B cell (primary cell): ENCODE measurements at regions of chr1 and their contacts with region 1.

Region 1: GRCh38 chr1:51491166-51491981 is 27.7 kb downstream of the EPS15 start:
- DNase-seq: peak; percentile 64
- ATAC-seq: peak; percentile 74
- H3K4me3 ChIP-seq: peak overlapping the region in 1 of 5 experiments; percentile 55
- H3K4me3 Mint-ChIP-seq: peak overlapping the region; percentile 83
- H3K27ac ChIP-seq: peak overlapping the region; percentile 67 to 84
- H3K27ac Mint-ChIP-seq: peak overlapping the region; percentile 88
- H3K4me1 ChIP-seq: peaks cover 52 to 53% of the 10 kb centered on the region in 2 donors
- H3K4me1 Mint-ChIP-seq: peaks cover 61% of the 10 kb centered on the region
- H3K27me3 ChIP-seq: no peaks in the 10 kb centered on the region
- H3K27me3 Mint-ChIP-seq: no peaks in the 10 kb centered on the region
- CTCF ChIP-seq: no peak

Region 2: GRCh38 chr1:51472359-51472758 is 19.0 kb before region 1 on chr1:
- CTCF ChIA-PET with region 1: no interaction called
- POLR2A ChIA-PET with region 1: no interaction called
- intact Hi-C with region 1: loop called (anchors 2 kb)
- DNase-seq: no peak
- ATAC-seq: no peak
- H3K4me3 ChIP-seq: no peak overlapping the region
- H3K4me3 Mint-ChIP-seq: no peak overlapping the region
- H3K27ac ChIP-seq: peak overlapping the region in 1 of 2 donors; percentile 58
- H3K27ac Mint-ChIP-seq: no peak overlapping the region
- H3K4me1 ChIP-seq: no peaks in the 10 kb centered on the region
- H3K4me1 Mint-ChIP-seq: peaks cover 16% of the 10 kb centered on the region
- H3K27me3 ChIP-seq: no peaks in the 10 kb centered on the region
- H3K27me3 Mint-ChIP-seq: no peaks in the 10 kb centered on the region
- CTCF ChIP-seq: no peak

Region 3: GRCh38 chr1:51506537-51506936 is 15.2 kb after region 1 on chr1:
- CTCF ChIA-PET with region 1: interaction called, 4 read pairs
- POLR2A ChIA-PET with region 1: interaction called, 7 read pairs
- intact Hi-C with region 1: loop called (anchors 1 kb)
- DNase-seq: peak; percentile 50
- ATAC-seq: peak; percentile 10
- H3K4me3 ChIP-seq: no peak overlapping the region
- H3K4me3 Mint-ChIP-seq: peak overlapping the region; percentile 40
- H3K27ac ChIP-seq: peak overlapping the region in 1 of 2 donors; percentile 70
- H3K27ac Mint-ChIP-seq: peak overlapping the region; percentile 47
- H3K4me1 ChIP-seq: peaks cover 37 to 41% of the 10 kb centered on the region in 2 donors
- H3K4me1 Mint-ChIP-seq: peaks cover 69% of the 10 kb centered on the region
- H3K27me3 ChIP-seq: no peaks in the 10 kb centered on the region
- H3K27me3 Mint-ChIP-seq: no peaks in the 10 kb centered on the region
- CTCF ChIP-seq: no peak

Region 4: DNA sequence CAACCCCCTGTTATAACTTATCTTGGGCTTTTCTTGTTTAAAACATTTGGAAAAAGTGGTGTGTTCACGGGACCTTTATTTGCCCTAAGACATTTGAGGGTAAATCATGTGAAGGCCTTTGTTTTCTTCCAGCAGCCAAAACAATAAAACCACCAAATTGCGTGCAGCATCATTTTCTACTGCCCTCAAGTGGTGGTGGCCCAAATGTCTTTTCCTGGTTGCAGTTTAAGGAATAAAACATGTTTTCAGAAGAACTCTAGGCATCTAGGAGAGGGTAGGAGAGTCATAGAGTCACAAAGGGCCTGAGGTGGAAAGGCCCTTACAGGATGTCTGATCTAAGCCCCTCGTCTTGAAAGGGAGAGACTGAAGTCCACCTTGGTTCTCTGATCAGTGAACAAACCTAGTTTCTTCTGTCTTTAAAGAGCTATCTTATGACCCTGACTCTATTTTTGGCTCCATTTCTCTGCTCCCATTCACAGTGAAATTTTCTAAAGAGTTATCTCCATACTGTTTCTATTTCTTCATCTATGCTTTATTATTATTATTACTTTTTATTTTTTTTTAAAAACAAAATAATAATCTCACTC is 43.7 kb after region 1 on chr1:
- CTCF ChIA-PET with region 1: interaction called, 12 read pairs
- POLR2A ChIA-PET with region 1: no interaction called
- intact Hi-C with region 1: no loop called
- DNase-seq: peak; percentile 59
- ATAC-seq: peak; percentile 43
- H3K4me3 ChIP-seq: no peak overlapping the region
- H3K4me3 Mint-ChIP-seq: no peak overlapping the region
- H3K27ac ChIP-seq: no peak overlapping the region
- H3K27ac Mint-ChIP-seq: peak overlapping the region; percentile 39
- H3K4me1 ChIP-seq: peaks cover 0 to 8% of the 10 kb centered on the region in 2 donors
- H3K4me1 Mint-ChIP-seq: peaks cover 14% of the 10 kb centered on the region
- H3K27me3 ChIP-seq: no peaks in the 10 kb centered on the region
- H3K27me3 Mint-ChIP-seq: no peaks in the 10 kb centered on the region
- CTCF ChIP-seq: peak; percentile 70

Region 5: DNA sequence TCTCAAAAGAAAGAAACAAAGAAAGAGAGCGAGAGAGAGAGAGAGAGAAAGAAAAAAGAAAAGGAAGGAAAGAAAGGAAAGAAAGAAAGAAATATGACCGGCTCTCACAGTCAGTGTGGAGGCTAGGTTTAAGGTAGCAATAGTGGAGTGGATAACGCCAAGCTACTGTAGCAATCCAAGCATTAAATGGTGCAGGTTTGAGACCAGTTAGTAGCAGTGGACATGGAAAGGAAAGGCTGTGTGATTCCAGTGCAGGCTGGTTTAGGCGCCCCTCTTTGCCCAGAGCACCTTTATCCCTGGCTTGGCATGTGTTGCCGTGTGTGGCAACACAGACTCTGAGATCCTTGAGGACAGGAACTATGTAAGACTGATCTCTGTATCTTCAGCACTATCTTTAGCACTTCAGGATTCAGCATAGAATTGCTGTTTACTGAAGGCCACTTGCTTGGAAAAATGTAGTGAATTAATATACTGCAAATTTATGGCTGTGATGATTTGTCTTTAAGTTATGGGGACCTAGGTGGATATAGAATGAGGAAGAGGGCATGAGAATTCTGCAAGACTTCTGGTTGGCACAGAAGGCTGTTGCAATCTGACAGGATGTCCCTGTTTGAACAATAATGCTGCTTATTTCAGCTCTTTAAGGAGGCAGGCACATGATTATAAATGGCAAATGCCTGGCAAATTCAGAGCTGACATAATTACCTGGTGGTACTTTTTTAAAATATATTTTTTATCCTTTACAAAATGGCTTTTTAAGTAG is 114.8 kb after region 1 on chr1:
- CTCF ChIA-PET with region 1: no interaction called
- POLR2A ChIA-PET with region 1: interaction called, 11 read pairs
- intact Hi-C with region 1: no loop called
- DNase-seq: no peak
- ATAC-seq: no peak
- H3K4me3 ChIP-seq: no peak overlapping the region
- H3K4me3 Mint-ChIP-seq: no peak overlapping the region
- H3K27ac ChIP-seq: no peak overlapping the region
- H3K27ac Mint-ChIP-seq: no peak overlapping the region
- H3K4me1 ChIP-seq: no peaks in the 10 kb centered on the region
- H3K4me1 Mint-ChIP-seq: no peaks in the 10 kb centered on the region
- H3K27me3 ChIP-seq: peaks cover 0 to 3% (median 0%) of the 10 kb centered on the region in 4 experiments
- H3K27me3 Mint-ChIP-seq: peaks cover under 1% of the 10 kb centered on the region
- CTCF ChIP-seq: no peak